Activated CD4-positive, alpha-beta memory T cell treated with anti-CD3 and anti-CD28 coated beads, Interleukin-2, amount 10 ng/mL, durations not matched to agents 7 days and 5 days (primary cell): ENCODE measurements at regions of chr14 and their contacts with region 1.

Region 1: DNA sequence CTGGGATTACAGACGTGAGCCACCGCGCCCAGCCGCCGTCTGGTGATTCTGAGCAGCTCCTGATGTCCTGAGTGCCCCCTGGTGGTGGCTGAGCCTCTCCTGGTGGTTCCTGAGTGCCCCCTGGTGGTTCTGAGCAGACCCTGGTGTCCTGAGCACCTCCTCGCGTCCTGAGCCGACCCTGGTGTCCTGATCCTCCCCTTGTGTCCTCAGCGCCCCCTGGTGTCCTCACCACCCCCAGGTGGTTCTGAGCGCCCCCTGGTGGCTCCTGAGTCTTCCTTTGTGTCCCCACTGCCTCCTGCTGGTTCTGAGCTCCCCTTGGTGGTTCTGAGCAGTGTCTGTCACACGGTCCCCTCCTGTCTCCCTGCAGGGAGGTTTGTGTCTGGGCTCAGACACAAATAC is 1304.9 kb downstream of the TMEM121 start:
- DNase-seq: peak; percentile 62
- H3K4me3 Mint-ChIP-seq: no peak overlapping the region
- H3K27ac Mint-ChIP-seq: no peak overlapping the region
- H3K4me1 Mint-ChIP-seq: no peaks in the 10 kb centered on the region
- H3K27me3 Mint-ChIP-seq: peaks cover 40% of the 10 kb centered on the region

Region 2: GRCh38 chr14:106665814-106666213 is 165.5 kb before region 1 on chr14:
- CTCF ChIA-PET with region 1: interaction called, 11 read pairs
- POLR2A ChIA-PET with region 1: no interaction called
- DNase-seq: no peak
- H3K4me3 Mint-ChIP-seq: no peak overlapping the region
- H3K27ac Mint-ChIP-seq: no peak overlapping the region
- H3K4me1 Mint-ChIP-seq: peaks cover 6% of the 10 kb centered on the region
- H3K27me3 Mint-ChIP-seq: peaks cover 52% of the 10 kb centered on the region

Region 3: GRCh38 chr14:106790189-106791036 is 40.9 kb before region 1 on chr14:
- CTCF ChIA-PET with region 1: interaction called, 25 read pairs
- POLR2A ChIA-PET with region 1: no interaction called
- DNase-seq: peak; percentile 78
- H3K4me3 Mint-ChIP-seq: no peak overlapping the region
- H3K27ac Mint-ChIP-seq: no peak overlapping the region
- H3K4me1 Mint-ChIP-seq: peaks cover 11% of the 10 kb centered on the region
- H3K27me3 Mint-ChIP-seq: peaks cover 39% of the 10 kb centered on the region

Region 4: GRCh38 chr14:106813477-106813823 is 17.9 kb before region 1 on chr14:
- CTCF ChIA-PET with region 1: interaction called, 20 read pairs
- POLR2A ChIA-PET with region 1: no interaction called
- DNase-seq: no peak
- H3K4me3 Mint-ChIP-seq: no peak overlapping the region
- H3K27ac Mint-ChIP-seq: no peak overlapping the region
- H3K4me1 Mint-ChIP-seq: peaks cover 25% of the 10 kb centered on the region
- H3K27me3 Mint-ChIP-seq: peaks cover 24% of the 10 kb centered on the region

Region 5: GRCh38 chr14:106850913-106851825 is 19.8 kb after region 1 on chr14:
- CTCF ChIA-PET with region 1: interaction called, 16 read pairs
- POLR2A ChIA-PET with region 1: no interaction called
- DNase-seq: no peak
- H3K4me3 Mint-ChIP-seq: no peak overlapping the region
- H3K27ac Mint-ChIP-seq: no peak overlapping the region
- H3K4me1 Mint-ChIP-seq: no peaks in the 10 kb centered on the region
- H3K27me3 Mint-ChIP-seq: peaks cover 53% of the 10 kb centered on the region